Activated T-helper 2 cell treated with anti-CD3 and anti-CD28 coated beads, Interferon-gamma antibody, Interleukin-2, Interleukin-4, amounts not matched to agents 10 μg/mL and 5 μg/mL and 100 μg/mL, durations not matched to agents 14 hours and 24 hours and 36 hours (primary cell): ENCODE measurements at regions of chr1 and their contacts with region 1.

Region 1: GRCh38 chr1:172443626-172444453 is at the start of gene PIGC:
- DNase-seq: peak; percentile 86
- H3K4me3 Mint-ChIP-seq: peak within 1 kb of the TSS; percentile 90
- H3K27ac Mint-ChIP-seq: peak within 1 kb of the TSS; percentile 87
- H3K4me1 Mint-ChIP-seq: peaks cover 30% of the 10 kb centered on the region
- H3K27me3 Mint-ChIP-seq: no peaks in the 10 kb centered on the region
- total RNA-seq, gene PIGC: 20.7 and 21.8 TPM in 2 replicates

Region 2: GRCh38 chr1:172002725-172003345 is 441.0 kb before region 1 on chr1:
- intact Hi-C with region 1: loop called (anchors 5 kb)
- DNase-seq: no peak
- H3K4me3 Mint-ChIP-seq: no peak overlapping the region
- H3K27ac Mint-ChIP-seq: no peak overlapping the region
- H3K4me1 Mint-ChIP-seq: no peaks in the 10 kb centered on the region
- H3K27me3 Mint-ChIP-seq: no peaks in the 10 kb centered on the region

Region 3: DNA sequence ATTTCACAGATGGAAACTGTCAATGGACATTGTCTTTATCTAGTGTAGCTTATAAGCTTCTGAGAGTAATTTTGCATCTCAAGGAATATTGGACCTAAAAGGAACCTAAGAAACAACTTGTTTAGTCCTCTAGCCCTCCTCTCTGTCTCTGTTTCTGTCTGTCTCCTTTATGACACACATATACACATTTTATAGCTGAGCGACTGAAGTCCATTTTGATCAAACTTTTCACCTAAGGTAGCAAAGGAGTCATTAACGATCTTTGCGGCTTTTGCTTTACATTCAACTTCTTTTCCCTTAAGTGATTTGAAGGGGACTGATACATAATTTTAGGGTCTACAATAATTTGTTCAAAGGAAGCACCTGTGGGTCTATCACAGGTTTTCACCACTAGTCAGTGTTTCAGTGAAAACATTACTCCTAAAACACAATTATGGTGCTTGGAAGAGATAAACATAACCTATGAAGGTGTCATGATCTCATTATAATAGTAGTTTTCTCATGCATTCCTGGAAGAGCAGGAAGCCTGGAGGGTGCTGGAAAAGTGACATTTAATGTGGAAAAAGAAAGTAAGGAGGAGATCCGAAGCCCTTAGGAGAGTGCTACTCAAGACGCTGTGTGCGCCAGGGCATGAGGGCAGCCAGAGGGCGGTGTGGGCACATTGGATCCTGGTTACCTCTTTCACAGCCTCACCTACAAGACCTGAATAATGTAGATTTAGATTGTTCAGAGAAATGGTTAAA is 353.9 kb before region 1 on chr1:
- intact Hi-C with region 1: loop called (anchors 2 kb)
- DNase-seq: peak; percentile 27
- H3K4me3 Mint-ChIP-seq: no peak overlapping the region
- H3K27ac Mint-ChIP-seq: no peak overlapping the region
- H3K4me1 Mint-ChIP-seq: peaks cover 7% of the 10 kb centered on the region
- H3K27me3 Mint-ChIP-seq: peaks cover 7% of the 10 kb centered on the region

Region 4: DNA sequence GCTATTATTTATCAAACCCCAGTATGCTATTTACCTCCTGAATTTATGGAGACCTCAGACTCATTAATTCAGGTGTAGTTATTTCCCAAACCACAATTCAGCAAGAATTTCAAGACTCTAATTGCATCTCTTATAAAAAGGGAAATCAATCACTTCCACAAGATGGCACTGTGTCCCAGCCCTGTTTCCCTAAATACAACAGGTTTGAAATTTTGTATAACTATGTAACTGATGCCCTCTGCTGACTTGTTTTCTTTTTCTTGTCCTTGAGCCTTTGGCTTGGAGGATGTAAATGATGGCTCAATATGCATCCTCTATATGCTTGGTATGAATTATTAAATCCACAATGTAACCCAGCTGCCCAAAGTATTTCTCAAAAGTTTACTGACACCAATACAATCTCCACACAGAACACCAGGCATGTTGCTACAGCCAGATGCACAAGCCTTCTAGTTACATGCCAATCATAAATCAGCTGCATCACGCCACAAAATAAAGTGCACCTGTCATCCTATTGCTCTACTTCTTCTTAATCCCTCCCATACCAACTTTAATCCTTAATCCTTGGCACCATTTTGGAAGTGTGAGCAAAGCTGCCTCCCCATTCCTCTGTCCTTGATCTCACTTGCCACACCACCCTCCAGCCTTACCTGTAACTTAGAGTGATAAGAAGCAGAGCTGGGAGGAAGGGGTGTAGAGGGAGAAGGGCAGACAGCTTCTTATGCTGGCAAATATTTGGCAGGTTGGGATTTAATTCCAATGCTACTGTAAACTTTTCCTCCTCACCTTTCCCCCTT is 14.3 kb before region 1 on chr1:
- intact Hi-C with region 1: loop called (anchors 1 kb)
- DNase-seq: no peak
- H3K4me3 Mint-ChIP-seq: no peak overlapping the region
- H3K27ac Mint-ChIP-seq: no peak overlapping the region
- H3K4me1 Mint-ChIP-seq: peaks cover 23% of the 10 kb centered on the region
- H3K27me3 Mint-ChIP-seq: no peaks in the 10 kb centered on the region